AG04450 (cell line): ENCODE measurements at regions of chr19 and their contacts with region 1.

Region 1: DNA sequence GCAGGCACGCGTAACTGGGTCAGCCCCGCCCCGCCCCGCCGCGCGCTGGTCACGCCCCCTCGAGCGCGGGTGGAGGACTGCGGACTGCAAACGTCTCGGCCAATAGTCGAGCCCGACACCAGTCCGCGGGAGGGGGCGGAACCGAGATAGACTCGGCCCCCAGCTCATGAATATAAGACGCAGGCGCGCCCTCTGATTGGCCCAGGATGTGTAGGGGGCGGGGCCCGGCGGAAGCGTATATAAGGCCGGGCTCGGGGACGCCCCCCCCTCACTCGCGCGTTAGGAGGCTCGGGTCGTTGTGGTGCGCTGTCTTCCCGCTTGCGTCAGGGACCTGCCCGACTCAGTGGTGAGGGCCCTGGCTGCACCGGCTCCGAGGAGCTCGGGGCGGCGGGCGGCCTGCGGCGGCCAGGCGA is at the start of gene CIRBP:
- DNase-seq: peak; percentile 98
- H3K4me3 ChIP-seq: peak within 1 kb of the TSS; percentile 94
- H3K27ac ChIP-seq: peak within 1 kb of the TSS; percentile 94
- H3K27me3 ChIP-seq: no peaks in the 10 kb centered on the region
- CTCF ChIP-seq: no peak
- polyA plus RNA-seq, gene CIRBP: 269 and 274 TPM in 2 replicates

Region 2: GRCh38 chr19:1026189-1027019 is 242.7 kb before region 1 on chr19 and contains the start of gene CNN2:
- CTCF ChIA-PET with region 1: no interaction called
- POLR2A ChIA-PET with region 1: interaction called, 13 read pairs
- DNase-seq: no peak
- H3K4me3 ChIP-seq: peak within 1 kb of the TSS; percentile 89
- H3K27ac ChIP-seq: peak within 1 kb of the TSS; percentile 98
- H3K27me3 ChIP-seq: no peaks in the 10 kb centered on the region
- CTCF ChIP-seq: no peak
- polyA plus RNA-seq, gene CNN2: 302 and 362 TPM in 2 replicates

Region 3: DNA sequence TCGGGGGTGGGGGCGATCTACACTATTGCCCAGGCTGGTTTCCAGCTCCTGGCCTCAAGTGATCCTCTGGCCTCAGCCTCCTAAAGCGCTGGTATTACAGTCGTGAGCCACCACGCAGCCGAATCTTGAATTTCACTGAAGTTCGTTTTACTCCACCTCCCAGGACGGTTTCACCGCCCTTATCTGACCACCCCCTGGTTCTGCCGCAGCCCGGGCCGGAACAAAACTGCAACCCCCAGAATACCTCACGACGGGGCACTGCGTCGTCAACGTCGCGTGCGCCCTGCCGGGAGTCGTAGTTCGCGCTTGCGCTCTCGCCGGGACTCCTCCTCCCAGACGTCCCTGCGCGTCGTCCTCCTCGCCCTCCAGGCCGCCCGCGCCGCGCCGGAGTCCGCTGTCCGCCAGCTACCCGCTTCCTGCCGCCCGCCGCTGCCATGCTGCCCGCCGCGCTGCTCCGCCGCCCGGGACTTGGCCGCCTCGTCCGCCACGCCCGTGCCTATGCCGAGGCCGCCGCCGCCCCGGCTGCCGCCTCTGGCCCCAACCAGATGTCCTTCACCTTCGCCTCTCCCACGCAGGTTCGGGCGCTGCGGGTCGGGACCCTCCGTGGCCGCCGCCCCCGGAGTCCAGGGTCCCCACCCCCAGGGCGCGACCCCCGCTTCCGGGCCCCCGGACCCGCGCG is 27.5 kb before region 1 on chr19 and contains the start of gene ATP5F1D:
- CTCF ChIA-PET with region 1: interaction called, 224 read pairs
- POLR2A ChIA-PET with region 1: interaction called, 237 read pairs
- DNase-seq: peak; percentile 89
- H3K4me3 ChIP-seq: peak within 1 kb of the TSS; percentile 77
- H3K27ac ChIP-seq: peak within 1 kb of the TSS; percentile 57
- H3K27me3 ChIP-seq: no peaks in the 10 kb centered on the region
- CTCF ChIP-seq: no peak
- polyA plus RNA-seq, gene ATP5F1D: 36.4 and 55.1 TPM in 2 replicates

Region 4: DNA sequence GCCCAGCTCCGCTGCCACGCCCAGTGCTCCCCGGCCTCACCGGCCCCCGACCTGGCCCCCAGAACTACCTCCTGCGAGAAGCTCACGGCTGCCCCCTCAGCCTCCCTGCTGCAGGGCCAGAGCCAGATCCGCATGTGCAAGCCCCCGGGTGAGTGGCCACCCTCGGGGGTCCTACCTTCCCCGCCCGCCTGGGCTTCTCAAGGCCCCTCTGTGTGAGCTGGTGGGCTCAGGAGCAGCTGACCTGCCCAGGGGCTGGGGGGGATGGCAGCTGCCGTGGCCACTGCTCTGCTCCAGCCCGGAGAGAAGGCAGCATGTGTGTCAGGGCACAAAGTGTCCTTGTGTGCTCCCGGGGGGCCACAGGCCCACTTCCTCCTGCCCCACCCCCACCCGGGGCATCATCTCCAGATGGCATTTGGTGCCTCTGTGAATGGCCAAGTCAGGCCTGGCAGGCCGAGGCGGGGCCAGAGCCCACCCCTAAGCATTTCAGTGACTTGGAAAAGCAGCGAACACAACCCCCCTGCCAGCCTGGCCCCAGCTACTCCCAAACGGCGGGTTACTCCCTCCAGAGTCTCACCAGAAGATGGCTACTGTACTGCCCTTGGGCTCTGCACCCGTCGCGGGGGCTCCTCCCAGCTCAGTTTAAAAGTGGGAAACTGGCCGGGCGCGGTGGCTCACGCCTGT is 13.4 kb before region 1 on chr19:
- CTCF ChIA-PET with region 1: interaction called, 13 read pairs
- POLR2A ChIA-PET with region 1: interaction called, 241 read pairs
- DNase-seq: no peak
- H3K4me3 ChIP-seq: no peak overlapping the region
- H3K27ac ChIP-seq: peak overlapping the region; percentile 61
- H3K27me3 ChIP-seq: no peaks in the 10 kb centered on the region
- CTCF ChIP-seq: no peak

Region 5: GRCh38 chr19:1394252-1395193 is 125.5 kb after region 1 on chr19:
- CTCF ChIA-PET with region 1: no interaction called
- POLR2A ChIA-PET with region 1: no interaction called
- DNase-seq: no peak
- H3K4me3 ChIP-seq: no peak overlapping the region
- H3K27ac ChIP-seq: no peak overlapping the region
- H3K27me3 ChIP-seq: no peaks in the 10 kb centered on the region
- CTCF ChIP-seq: no peak

Region 6: DNA sequence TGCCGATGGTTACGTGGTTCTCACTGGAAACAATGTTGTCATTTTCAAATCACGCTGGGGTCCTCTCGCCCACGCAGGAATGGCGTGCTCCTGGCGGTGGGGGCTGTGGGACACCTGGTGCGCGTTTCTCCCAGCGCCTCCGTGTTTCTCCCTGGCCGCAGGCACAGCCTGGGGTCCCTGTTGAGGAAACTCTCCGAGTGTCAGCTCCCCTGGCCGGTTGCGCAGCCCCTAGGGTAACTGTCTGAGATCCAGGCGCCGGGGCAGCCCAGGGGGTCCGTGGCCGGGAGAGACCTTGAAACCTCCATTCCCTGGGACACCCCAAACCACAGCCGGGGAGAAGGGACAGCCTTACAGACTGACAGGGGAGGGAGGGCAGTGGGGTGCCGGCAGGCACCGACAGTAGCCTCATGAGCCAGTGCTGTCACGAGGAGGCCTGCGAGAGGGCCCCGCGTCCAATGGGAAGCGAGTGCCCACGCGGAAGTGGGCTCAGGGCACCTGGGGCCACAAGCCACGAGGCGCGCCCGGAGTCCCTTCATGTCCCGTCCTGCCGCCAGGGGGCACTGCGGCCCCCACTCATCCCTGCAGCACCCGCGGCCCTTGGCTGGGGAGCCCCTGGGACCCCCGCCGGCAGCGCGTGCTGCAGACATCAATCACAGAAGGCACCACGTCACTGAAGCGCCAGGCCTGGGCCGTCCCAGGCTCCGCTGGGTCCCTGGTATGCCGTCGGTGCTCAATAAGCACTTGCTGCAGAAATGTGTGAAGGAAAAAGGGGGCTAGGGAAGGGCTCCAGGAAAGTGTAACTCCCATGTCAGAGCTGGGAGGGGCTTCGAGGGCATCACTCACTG is 234.2 kb after region 1 on chr19:
- CTCF ChIA-PET with region 1: no interaction called
- POLR2A ChIA-PET with region 1: interaction called, 12 read pairs
- DNase-seq: no peak
- H3K4me3 ChIP-seq: peak overlapping the region; percentile 41
- H3K27ac ChIP-seq: no peak overlapping the region
- H3K27me3 ChIP-seq: peaks cover 18% of the 10 kb centered on the region
- CTCF ChIP-seq: peak; percentile 64